ENCODE measurements at regions of chr6 and their contacts with region 1.

Region 1: GRCh38 chr6:2353412-2354137 is 108.2 kb upstream of the GMDS start:
- DNase-seq: peak; percentile 12 to 90
- H3K4me3 ChIP-seq: peak overlapping the region in 1 of 2 donors; percentile 14
- H3K27ac ChIP-seq: peak overlapping the region; percentile 80 to 90
- H3K4me1 ChIP-seq: peaks cover 4 to 25% of the 10 kb centered on the region in 2 donors
- H3K27me3 ChIP-seq: no peaks in the 10 kb centered on the region
- CTCF ChIP-seq: peak; percentile 56 to 73 (median 72)

Region 2: GRCh38 chr6:1901556-1901955 is 452.0 kb before region 1 on chr6:
- intact Hi-C with region 1: loop called (anchors 5 kb)
- DNase-seq: no peak
- H3K4me3 ChIP-seq: no peak overlapping the region
- H3K27ac ChIP-seq: peak overlapping the region; percentile 86 to 93
- H3K4me1 ChIP-seq: peaks cover 18 to 37% of the 10 kb centered on the region in 2 donors
- H3K27me3 ChIP-seq: no peaks in the 10 kb centered on the region
- CTCF ChIP-seq: no peak

Region 3: GRCh38 chr6:2111162-2111677 is 242.4 kb before region 1 on chr6:
- intact Hi-C with region 1: loop called (anchors 1 kb)
- DNase-seq: no peak
- H3K4me3 ChIP-seq: peak overlapping the region in 1 of 2 donors; percentile 49
- H3K27ac ChIP-seq: peak overlapping the region; percentile 82 to 83
- H3K4me1 ChIP-seq: peaks cover 0 to 20% of the 10 kb centered on the region in 2 donors
- H3K27me3 ChIP-seq: no peaks in the 10 kb centered on the region
- CTCF ChIP-seq: no peak

Region 4: DNA sequence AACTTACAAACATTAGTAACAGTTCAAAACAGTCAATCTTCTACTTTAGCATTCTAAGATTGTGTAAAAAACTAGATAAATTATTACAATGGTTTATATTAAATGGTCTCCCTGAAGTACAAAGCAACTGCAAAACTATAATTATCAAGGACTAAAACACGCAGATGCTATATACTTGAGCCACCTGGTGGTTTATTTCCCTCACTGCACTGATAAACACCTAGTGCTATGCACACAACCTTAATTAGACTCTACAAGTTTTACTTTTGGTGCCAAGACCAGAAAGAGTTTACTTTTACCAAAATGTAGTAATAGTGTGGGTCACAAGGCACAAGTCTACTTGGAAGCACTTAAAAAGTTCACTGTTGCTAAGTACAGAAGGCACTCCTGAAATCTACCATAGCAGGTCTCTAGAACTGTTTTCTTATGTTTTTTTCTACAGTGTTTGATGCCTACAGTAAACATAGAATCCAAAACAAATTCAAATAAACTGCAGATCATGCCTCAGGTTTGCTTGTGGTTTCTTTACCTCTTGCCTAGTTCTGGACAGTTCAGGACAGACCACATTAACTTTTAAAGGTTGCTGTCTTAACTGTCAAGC is 157.4 kb before region 1 on chr6:
- intact Hi-C with region 1: loop called (anchors 5 kb)
- DNase-seq: no peak
- H3K4me3 ChIP-seq: no peak overlapping the region
- H3K27ac ChIP-seq: no peak overlapping the region
- H3K4me1 ChIP-seq: peaks cover 0 to 16% of the 10 kb centered on the region in 2 donors
- H3K27me3 ChIP-seq: no peaks in the 10 kb centered on the region
- CTCF ChIP-seq: peak; percentile 51 to 77 (median 75)

Region 5: GRCh38 chr6:2245094-2245876 is 108.3 kb before region 1 on chr6 and contains the start of gene GMDS:
- intact Hi-C with region 1: loop called (anchors 1 kb)
- DNase-seq: peak; percentile 56 to 93
- H3K4me3 ChIP-seq: peak within 1 kb of the TSS; percentile 86 to 95
- H3K27ac ChIP-seq: peak within 1 kb of the TSS; percentile 87 to 94
- H3K4me1 ChIP-seq: peaks cover 0 to 7% of the 10 kb centered on the region in 2 donors
- H3K27me3 ChIP-seq: no peaks in the 10 kb centered on the region
- CTCF ChIP-seq: no peak
- total RNA-seq, gene GMDS: 19.9 TPM

Region 6: DNA sequence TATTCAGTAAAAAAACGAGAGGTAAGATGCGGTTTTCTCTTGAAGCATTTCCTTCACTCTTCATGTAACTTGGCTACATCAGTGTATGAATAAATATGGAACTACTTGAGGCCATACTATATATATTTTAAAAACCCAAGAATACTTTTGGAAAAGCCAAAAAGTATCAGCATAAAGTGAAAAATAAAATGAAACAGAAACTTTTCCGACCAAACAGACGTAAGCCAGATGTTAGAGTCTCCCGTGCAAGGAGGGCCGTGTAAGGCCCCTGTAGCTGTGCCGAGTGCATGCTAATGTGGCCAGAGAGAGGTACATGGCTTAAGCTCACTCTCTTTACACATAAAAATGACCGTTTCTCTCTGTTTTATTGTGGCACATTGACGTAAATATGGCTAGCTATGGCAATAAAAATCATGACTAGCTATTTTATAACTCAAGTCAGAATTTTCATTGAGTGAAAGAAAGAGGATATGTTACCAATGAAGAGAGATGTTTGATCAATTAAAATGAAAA is 32.0 kb after region 1 on chr6:
- intact Hi-C with region 1: no loop called
- DNase-seq: no peak
- H3K4me3 ChIP-seq: no peak overlapping the region
- H3K27ac ChIP-seq: no peak overlapping the region
- H3K4me1 ChIP-seq: peaks cover 0 to 12% of the 10 kb centered on the region in 2 donors
- H3K27me3 ChIP-seq: no peaks in the 10 kb centered on the region
- CTCF ChIP-seq: no peak

Region 7: GRCh38 chr6:2448820-2449571 is 95.4 kb after region 1 on chr6:
- intact Hi-C with region 1: loop called (anchors 5 kb)
- DNase-seq: peak in 1 of 2 donors; percentile 76
- H3K4me3 ChIP-seq: peak overlapping the region; percentile 42 to 62
- H3K27ac ChIP-seq: peak overlapping the region; percentile 56 to 59
- H3K4me1 ChIP-seq: peaks cover 3 to 11% of the 10 kb centered on the region in 2 donors
- H3K27me3 ChIP-seq: no peaks in the 10 kb centered on the region
- CTCF ChIP-seq: peak; percentile 45 to 84 (median 76)